H1 (cell line): ENCODE measurements at regions of chr18 and their contacts with region 1.

Region 1: GRCh38 chr18:56851774-56852173 is 200.6 kb downstream of the WDR7 start:
- DNase-seq: no peak
- H3K4me3 ChIP-seq: no peak overlapping the region
- H3K27ac ChIP-seq: no peak overlapping the region
- H3K4me1 ChIP-seq: peaks cover 0 to 2% (median 0%) of the 10 kb centered on the region in 4 experiments; a peak in 1 of 7 replicates
- H3K27me3 ChIP-seq: no peaks in the 10 kb centered on the region
- CTCF ChIP-seq: no peak
- EP300 ChIP-seq: no peak
- POLR2A ChIP-seq: no peak
- RAD21 ChIP-seq: no peak

Region 2: GRCh38 chr18:56869189-56869777 is 17.5 kb after region 1 on chr18:
- CTCF ChIA-PET with region 1: interaction called, 11 read pairs
- POLR2A ChIA-PET with region 1: interaction called, 6 read pairs
- DNase-seq: no peak
- H3K4me3 ChIP-seq: no peak overlapping the region
- H3K27ac ChIP-seq: no peak overlapping the region
- H3K4me1 ChIP-seq: peaks cover 2 to 12% (median 7%) of the 10 kb centered on the region in 4 experiments; a peak in 6 of 7 replicates
- H3K27me3 ChIP-seq: no peaks in the 10 kb centered on the region
- CTCF ChIP-seq: peak in 2 of 3 experiments; percentile 23 to 54; a peak in 2 of 4 replicates
- EP300 ChIP-seq: no peak
- POLR2A ChIP-seq: no peak
- RAD21 ChIP-seq: peak; percentile 53

Region 3: DNA sequence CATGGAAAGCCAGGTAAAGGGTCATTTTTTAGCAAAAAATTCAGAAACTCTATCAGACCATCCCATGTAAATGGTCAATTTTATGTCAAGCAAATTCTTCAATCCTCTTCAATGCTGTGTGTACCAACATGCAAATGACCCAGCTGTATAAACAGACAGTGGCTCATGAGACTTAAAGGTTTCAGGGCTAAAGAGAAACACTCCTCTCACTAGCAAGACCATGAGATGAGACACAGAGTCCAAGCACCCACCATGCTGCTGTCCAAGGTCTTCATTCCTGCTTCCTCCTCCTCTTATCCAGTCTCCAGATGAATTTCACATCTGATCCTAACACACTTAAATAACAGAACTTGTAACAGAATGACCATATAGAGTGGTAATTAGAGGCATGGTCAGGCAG is 552.6 kb after region 1 on chr18:
- CTCF ChIA-PET with region 1: no interaction called
- POLR2A ChIA-PET with region 1: no interaction called
- DNase-seq: no peak
- H3K4me3 ChIP-seq: no peak overlapping the region
- H3K27ac ChIP-seq: no peak overlapping the region
- H3K4me1 ChIP-seq: no peaks in the 10 kb centered on the region
- H3K27me3 ChIP-seq: no peaks in the 10 kb centered on the region
- CTCF ChIP-seq: no peak
- EP300 ChIP-seq: no peak
- POLR2A ChIP-seq: no peak
- RAD21 ChIP-seq: no peak